ENCODE measurements at regions of chr2 and their contacts with region 1.

Region 1: GRCh38 chr2:47174733-47175361 is 19.7 kb upstream of the STPG4 start:
- DNase-seq: peak; percentile 62
- ATAC-seq: no peak
- H3K4me3 ChIP-seq: peak overlapping the region; percentile 89
- H3K27ac ChIP-seq: peak overlapping the region; percentile 97
- H3K4me1 ChIP-seq: peaks cover 8% of the 10 kb centered on the region
- H3K27me3 ChIP-seq: no peaks in the 10 kb centered on the region
- CTCF ChIP-seq: no peak
- POLR2A ChIP-seq: peak; percentile 68
- RAD21 ChIP-seq: no peak; the same call in 1 of the 2 replicates

Region 2: GRCh38 chr2:47004905-47005495 is 169.8 kb before region 1 on chr2:
- CTCF ChIA-PET with region 1: no interaction called
- POLR2A ChIA-PET with region 1: interaction called, 19 read pairs
- dilution Hi-C with region 1: no loop called
- in situ Hi-C with region 1: no loop called
- intact Hi-C with region 1: no loop called
- DNase-seq: no peak
- ATAC-seq: no peak
- H3K4me3 ChIP-seq: no peak overlapping the region
- H3K27ac ChIP-seq: no peak overlapping the region
- H3K4me1 ChIP-seq: peaks cover 32% of the 10 kb centered on the region
- H3K27me3 ChIP-seq: no peaks in the 10 kb centered on the region
- CTCF ChIP-seq: no peak
- POLR2A ChIP-seq: no peak
- RAD21 ChIP-seq: no peak

Region 3: DNA sequence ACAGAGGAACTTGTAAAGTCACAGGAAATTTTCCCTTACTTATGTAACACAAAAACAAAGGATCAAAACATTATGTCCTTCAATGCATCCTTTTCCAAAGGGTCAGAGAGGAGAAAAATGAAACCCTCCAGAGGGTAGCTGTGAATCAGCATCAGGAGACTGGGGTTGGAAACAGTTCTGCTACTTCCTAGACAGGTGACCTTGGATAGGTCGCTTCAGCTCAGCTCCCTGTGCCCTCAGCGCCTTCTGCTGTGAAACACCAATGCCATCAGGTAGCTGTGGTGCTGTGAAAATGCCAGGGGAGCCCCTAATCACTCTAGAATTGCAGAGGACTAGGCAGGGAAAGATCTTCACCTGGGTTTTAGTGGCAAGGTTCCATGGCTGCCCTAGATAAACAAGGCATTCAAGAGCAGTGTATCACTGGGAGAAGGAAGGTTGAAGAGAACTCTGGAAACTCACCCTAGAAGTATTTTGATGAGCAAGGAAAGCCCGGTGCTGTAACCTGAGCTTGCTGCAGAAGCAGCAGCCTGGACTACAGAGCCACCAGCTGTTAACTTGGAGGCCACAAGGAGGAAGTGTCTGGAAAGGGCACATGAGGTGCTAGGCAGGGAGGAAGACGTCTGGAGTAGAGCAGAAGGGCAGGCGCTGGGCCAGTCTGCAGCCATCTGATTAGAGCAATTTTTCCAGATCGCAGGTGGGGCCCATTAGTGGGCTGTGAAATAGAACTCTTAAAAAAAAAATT is 158.5 kb before region 1 on chr2:
- CTCF ChIA-PET with region 1: no interaction called
- POLR2A ChIA-PET with region 1: no interaction called
- dilution Hi-C with region 1: no loop called
- in situ Hi-C with region 1: no loop called
- intact Hi-C with region 1: loop called (anchors 5 kb)
- DNase-seq: peak; percentile 98
- ATAC-seq: peak; percentile 94
- H3K4me3 ChIP-seq: no peak overlapping the region
- H3K27ac ChIP-seq: peak overlapping the region; percentile 61
- H3K4me1 ChIP-seq: peaks cover 15% of the 10 kb centered on the region
- H3K27me3 ChIP-seq: no peaks in the 10 kb centered on the region
- CTCF ChIP-seq: peak; percentile 48
- POLR2A ChIP-seq: no peak
- RAD21 ChIP-seq: peak; percentile 58